Activated naive CD4-positive, alpha-beta T cell treated with anti-CD3 and anti-CD28 coated beads for 36 hours (primary cell): ENCODE measurements at regions of chr1 and their contacts with region 1.

Region 1: DNA sequence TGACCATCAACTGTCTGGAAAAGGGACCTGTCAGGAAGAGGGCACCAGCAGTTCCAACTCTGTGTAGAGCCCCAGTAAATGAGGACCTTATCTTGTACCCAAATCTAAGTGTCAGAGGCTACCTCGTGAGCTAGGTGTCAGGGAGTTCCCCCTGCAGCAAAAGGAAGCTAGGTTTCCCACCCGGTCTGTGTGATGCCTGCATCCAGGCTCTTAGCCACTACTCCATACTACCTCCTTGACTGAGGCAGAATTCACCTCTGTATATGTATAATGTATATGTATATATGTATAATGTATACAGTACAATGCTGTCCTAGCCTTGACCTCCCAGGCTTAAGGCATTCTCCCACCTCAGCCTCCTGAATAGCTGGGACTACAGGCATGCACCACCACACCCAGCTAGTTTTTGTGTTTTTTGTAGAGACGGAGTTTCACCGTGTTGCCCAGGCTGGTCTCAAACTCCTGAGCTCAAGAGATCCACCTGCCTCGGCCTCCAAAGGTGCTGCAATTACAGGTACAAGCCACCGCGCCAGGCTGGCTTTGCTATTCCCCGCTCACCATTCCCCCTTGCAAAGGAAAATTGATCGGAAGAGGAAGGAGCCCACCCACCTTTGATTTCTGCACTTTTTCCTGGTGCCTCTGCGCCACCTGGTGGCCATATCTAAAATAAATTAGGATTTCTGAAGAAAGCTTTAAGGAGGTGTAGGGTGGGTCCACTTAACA is 15.7 kb upstream of the LUZP1 start:
- DNase-seq: peak; percentile 25
- H3K4me3 Mint-ChIP-seq: peak overlapping the region; percentile 47
- H3K27ac Mint-ChIP-seq: no peak overlapping the region
- H3K4me1 Mint-ChIP-seq: peaks cover 3% of the 10 kb centered on the region
- H3K27me3 Mint-ChIP-seq: no peaks in the 10 kb centered on the region

Region 2: GRCh38 chr1:22976461-22977243 is 207.7 kb before region 1 on chr1:
- CTCF ChIA-PET with region 1: interaction called, 8 read pairs
- intact Hi-C with region 1: loop called (anchors 1 kb)
- DNase-seq: peak; percentile 76
- H3K4me3 Mint-ChIP-seq: no peak overlapping the region
- H3K27ac Mint-ChIP-seq: no peak overlapping the region
- H3K4me1 Mint-ChIP-seq: no peaks in the 10 kb centered on the region
- H3K27me3 Mint-ChIP-seq: peaks cover 11% of the 10 kb centered on the region

Region 3: DNA sequence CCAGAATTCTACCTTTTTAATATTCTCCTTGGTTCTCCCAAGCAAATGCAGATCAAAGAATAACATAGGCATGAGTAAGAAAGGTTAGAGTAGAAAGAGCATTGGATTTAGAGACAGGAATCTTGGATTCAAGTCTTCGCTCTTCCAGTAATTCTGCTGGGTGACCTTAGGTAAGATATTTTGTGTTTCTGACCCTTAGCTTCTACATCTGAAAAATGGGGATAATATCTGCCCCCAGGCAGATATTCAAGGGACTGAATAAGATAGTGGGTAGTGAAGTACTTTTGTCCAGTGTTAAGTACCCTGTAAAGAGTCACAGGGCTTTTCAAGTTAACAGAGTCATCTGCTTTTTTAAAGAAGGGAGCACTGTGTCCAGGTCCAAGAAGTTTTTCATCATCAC is 94.3 kb before region 1 on chr1:
- CTCF ChIA-PET with region 1: interaction called, 404 read pairs
- intact Hi-C with region 1: no loop called
- DNase-seq: no peak
- H3K4me3 Mint-ChIP-seq: no peak overlapping the region
- H3K27ac Mint-ChIP-seq: no peak overlapping the region
- H3K4me1 Mint-ChIP-seq: peaks cover 4% of the 10 kb centered on the region
- H3K27me3 Mint-ChIP-seq: no peaks in the 10 kb centered on the region

Region 4: GRCh38 chr1:23111600-23112535 is 72.5 kb before region 1 on chr1:
- CTCF ChIA-PET with region 1: interaction called, 12 read pairs
- intact Hi-C with region 1: no loop called
- DNase-seq: no peak
- H3K4me3 Mint-ChIP-seq: no peak overlapping the region
- H3K27ac Mint-ChIP-seq: no peak overlapping the region
- H3K4me1 Mint-ChIP-seq: peaks cover 62% of the 10 kb centered on the region
- H3K27me3 Mint-ChIP-seq: no peaks in the 10 kb centered on the region

Region 5: DNA sequence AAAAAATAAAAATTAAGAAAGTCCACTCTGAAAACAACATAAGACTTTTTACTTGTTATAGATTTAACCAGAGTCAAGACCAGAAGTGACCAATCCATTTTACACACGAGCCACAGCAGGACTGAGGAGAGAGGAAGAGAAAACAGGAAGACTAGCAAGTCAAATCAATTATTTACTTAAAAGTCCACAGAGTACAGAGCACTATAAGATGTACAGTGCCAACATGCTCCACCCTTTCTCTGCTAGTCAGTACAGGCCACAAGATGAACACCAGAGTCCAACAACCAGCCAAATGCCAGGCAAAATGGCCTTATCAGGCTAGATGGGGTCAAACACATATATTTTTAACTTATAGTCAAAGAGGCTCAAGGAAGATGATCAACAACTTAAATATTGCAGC is 35.3 kb before region 1 on chr1:
- CTCF ChIA-PET with region 1: interaction called, 10 read pairs
- intact Hi-C with region 1: no loop called
- DNase-seq: no peak
- H3K4me3 Mint-ChIP-seq: no peak overlapping the region
- H3K27ac Mint-ChIP-seq: no peak overlapping the region
- H3K4me1 Mint-ChIP-seq: peaks cover 24% of the 10 kb centered on the region
- H3K27me3 Mint-ChIP-seq: no peaks in the 10 kb centered on the region

Region 6: DNA sequence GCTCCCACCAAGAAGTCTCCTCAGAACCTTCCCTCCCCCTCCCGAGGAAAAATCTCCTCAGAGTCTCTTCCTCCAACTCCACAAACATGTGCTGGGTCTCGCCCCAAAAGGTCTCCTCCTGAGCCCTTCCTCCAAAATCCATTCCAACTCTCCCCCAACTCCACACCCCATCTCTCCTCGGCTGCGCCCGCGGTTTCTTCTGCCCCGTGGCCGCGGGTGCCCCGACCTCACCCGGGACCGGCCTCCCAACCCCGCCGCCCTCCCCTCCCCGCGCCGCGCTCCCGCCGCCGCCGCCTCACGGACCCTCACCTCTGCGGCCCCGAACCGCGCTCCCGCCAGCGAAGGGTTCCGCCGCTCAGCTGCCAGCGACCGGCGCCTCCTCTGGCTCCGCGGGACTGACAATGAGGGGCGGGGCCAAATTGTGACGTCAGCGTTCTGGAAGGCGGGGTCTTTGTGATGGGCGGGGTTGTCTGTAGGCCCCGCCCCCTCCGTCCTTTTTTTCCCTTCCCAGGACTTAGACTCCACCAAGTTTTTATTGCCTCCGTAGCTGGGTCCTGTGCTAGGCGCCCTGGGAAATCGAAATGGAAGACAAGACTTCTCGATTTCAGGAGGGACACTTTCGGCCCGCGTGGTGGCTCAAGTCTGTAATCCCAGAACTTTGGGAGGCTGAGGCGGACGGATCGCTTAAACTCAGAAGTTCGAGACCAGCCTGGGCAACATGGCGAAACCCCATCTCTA is 15.7 kb before region 1 on chr1 and contains the start of gene LUZP1:
- CTCF ChIA-PET with region 1: interaction called, 28 read pairs
- intact Hi-C with region 1: no loop called
- DNase-seq: peak; percentile 93
- H3K4me3 Mint-ChIP-seq: peak within 1 kb of the TSS; percentile 98
- H3K27ac Mint-ChIP-seq: peak within 1 kb of the TSS; percentile 84
- H3K4me1 Mint-ChIP-seq: peaks cover 28% of the 10 kb centered on the region
- H3K27me3 Mint-ChIP-seq: no peaks in the 10 kb centered on the region
- total RNA-seq, gene LUZP1: 12.6 to 13.7 TPM